ENCODE measurements at regions of chr7 and their contacts with region 1.

Region 1: GRCh38 chr7:66493235-66494181 is 135.2 kb upstream of the KCTD7 start:
- DNase-seq: peak; percentile 98 to 100 (median 100)
- ATAC-seq: peak; percentile 90
- H3K4me3 ChIP-seq: peak overlapping the region; percentile 53
- H3K27ac ChIP-seq: peak overlapping the region; percentile 90
- H3K4me1 ChIP-seq: peaks cover 2 to 25% of the 10 kb centered on the region in 2 experiments; a peak in 4 of 5 replicates
- H3K27me3 ChIP-seq: no peaks in the 10 kb centered on the region
- CTCF ChIP-seq: peak in 2 of 3 experiments; percentile 31 to 36; a peak in 4 of 6 replicates
- EP300 ChIP-seq: peak; percentile 53
- POLR2A ChIP-seq: peak; percentile 99
- RAD21 ChIP-seq: peak in 1 of 2 experiments; percentile 23; a peak in 3 of 4 replicates

Region 2: DNA sequence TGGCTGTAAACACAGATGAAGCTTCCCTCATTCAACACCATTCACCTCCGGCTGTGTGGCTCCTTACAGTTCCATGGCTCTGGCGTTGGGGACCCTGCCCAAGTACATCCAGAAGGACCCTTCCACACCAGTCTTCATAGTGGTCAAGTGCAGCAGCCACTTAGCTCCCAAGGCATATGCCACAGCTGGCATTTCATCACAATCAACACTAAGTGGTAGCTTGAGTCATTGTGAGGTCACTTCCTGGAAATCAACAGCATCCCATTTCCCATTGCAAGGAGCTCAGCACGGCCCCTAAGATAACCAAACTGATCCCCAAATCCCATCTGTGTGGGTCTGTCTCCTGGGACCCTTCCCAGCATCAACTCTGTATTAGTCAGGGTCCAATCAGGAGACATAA is 113.7 kb before region 1 on chr7:
- CTCF ChIA-PET with region 1: no interaction called
- POLR2A ChIA-PET with region 1: no interaction called
- in situ Hi-C with region 1: no loop called
- intact Hi-C with region 1: loop called (anchors 5 kb)
- DNase-seq: no peak
- ATAC-seq: no peak
- H3K4me3 ChIP-seq: no peak overlapping the region
- H3K27ac ChIP-seq: no peak overlapping the region
- H3K4me1 ChIP-seq: peaks cover 4 to 12% of the 10 kb centered on the region in 2 experiments; a peak in 3 of 5 replicates
- H3K27me3 ChIP-seq: no peaks in the 10 kb centered on the region
- CTCF ChIP-seq: no peak
- EP300 ChIP-seq: no peak
- POLR2A ChIP-seq: no peak
- RAD21 ChIP-seq: no peak

Region 3: GRCh38 chr7:66443946-66444345 is 49.6 kb before region 1 on chr7:
- CTCF ChIA-PET with region 1: no interaction called
- POLR2A ChIA-PET with region 1: no interaction called
- in situ Hi-C with region 1: no loop called
- intact Hi-C with region 1: loop called (anchors 5 kb)
- DNase-seq: no peak
- ATAC-seq: 0 out of 3 replicates have a peak, but pooled peaks have one; percentile 18
- H3K4me3 ChIP-seq: no peak overlapping the region
- H3K27ac ChIP-seq: no peak overlapping the region
- H3K4me1 ChIP-seq: peaks cover 0 to 13% of the 10 kb centered on the region in 2 experiments; a peak in 2 of 5 replicates
- H3K27me3 ChIP-seq: no peaks in the 10 kb centered on the region
- CTCF ChIP-seq: no peak
- EP300 ChIP-seq: no peak
- POLR2A ChIP-seq: no peak
- RAD21 ChIP-seq: no peak

Region 4: GRCh38 chr7:66913118-66914037 is 419.9 kb after region 1 on chr7:
- CTCF ChIA-PET with region 1: no interaction called
- POLR2A ChIA-PET with region 1: no interaction called
- in situ Hi-C with region 1: no loop called
- intact Hi-C with region 1: no loop called
- DNase-seq: peak in 1 of 4 experiments; percentile 35
- ATAC-seq: peak; percentile 31; the same call in 2 of the 3 replicates
- H3K4me3 ChIP-seq: no peak overlapping the region
- H3K27ac ChIP-seq: no peak overlapping the region
- H3K4me1 ChIP-seq: peaks cover 15 to 16% of the 10 kb centered on the region in 2 experiments; a peak in 4 of 5 replicates
- H3K27me3 ChIP-seq: no peaks in the 10 kb centered on the region
- CTCF ChIP-seq: no peak
- EP300 ChIP-seq: no peak
- POLR2A ChIP-seq: no peak
- RAD21 ChIP-seq: no peak